ENCODE measurements at regions of chr12 and their contacts with region 1.

Region 1: DNA sequence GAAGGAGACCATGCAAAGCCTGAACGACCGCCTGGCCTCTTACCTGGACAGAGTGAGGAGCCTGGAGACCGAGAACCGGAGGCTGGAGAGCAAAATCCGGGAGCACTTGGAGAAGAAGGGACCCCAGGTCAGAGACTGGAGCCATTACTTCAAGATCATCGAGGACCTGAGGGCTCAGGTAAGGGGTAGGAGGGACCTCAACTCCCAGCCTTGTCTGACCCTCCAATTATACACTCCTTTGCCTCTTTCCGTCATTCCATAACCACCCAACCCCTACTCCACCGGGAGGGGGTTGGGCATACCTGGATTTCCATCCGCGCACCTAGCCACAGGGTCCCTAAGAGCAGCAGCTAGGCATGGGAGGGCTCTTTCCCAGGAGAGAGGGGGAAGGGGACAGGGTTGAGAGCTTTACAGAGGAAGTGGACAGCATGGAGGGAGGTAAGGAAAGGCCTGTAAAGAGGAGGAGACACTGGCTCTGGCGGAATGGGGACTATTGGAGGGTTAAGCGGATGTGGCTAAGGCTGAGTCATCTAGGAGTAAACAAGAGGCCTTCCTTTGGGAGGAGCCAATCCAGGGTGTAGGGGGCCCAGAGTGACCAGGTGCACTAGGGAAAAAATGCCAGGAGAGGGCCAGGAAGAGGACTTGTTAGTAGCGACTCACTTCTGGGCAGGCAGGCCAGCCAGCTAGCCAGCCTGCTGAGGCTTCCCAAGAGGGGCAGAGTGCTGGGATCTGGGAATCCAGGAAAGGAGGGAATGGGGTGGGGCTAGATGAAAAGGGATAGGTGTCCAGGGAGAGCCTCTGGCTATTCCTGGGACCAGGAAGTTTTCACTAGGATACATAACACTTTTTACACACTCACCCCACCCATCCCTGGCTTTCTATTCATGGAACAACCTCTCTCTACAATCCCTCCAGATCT is 754 bp downstream of the KRT18 start:
- DNase-seq: peak; percentile 61 to 78
- H3K4me3 ChIP-seq: peak overlapping the region; percentile 94
- H3K27ac ChIP-seq: peak overlapping the region; percentile 95
- H3K4me1 ChIP-seq: peaks cover 41% of the 10 kb centered on the region
- H3K27me3 ChIP-seq: no peaks in the 10 kb centered on the region
- CTCF ChIP-seq: no peak

Region 2: GRCh38 chr12:52442600-52443061 is 507.0 kb before region 1 on chr12:
- CTCF ChIA-PET with region 1: no interaction called
- POLR2A ChIA-PET with region 1: interaction called, 10 read pairs
- intact Hi-C with region 1: no loop called
- DNase-seq: peak; percentile 82 to 92
- H3K4me3 ChIP-seq: peak overlapping the region; percentile 17; the same call in 1 of the 2 replicates
- H3K27ac ChIP-seq: peak overlapping the region; percentile 97
- H3K4me1 ChIP-seq: peaks cover 74% of the 10 kb centered on the region
- H3K27me3 ChIP-seq: no peaks in the 10 kb centered on the region
- CTCF ChIP-seq: no peak; the same call in 1 of the 2 replicates

Region 3: DNA sequence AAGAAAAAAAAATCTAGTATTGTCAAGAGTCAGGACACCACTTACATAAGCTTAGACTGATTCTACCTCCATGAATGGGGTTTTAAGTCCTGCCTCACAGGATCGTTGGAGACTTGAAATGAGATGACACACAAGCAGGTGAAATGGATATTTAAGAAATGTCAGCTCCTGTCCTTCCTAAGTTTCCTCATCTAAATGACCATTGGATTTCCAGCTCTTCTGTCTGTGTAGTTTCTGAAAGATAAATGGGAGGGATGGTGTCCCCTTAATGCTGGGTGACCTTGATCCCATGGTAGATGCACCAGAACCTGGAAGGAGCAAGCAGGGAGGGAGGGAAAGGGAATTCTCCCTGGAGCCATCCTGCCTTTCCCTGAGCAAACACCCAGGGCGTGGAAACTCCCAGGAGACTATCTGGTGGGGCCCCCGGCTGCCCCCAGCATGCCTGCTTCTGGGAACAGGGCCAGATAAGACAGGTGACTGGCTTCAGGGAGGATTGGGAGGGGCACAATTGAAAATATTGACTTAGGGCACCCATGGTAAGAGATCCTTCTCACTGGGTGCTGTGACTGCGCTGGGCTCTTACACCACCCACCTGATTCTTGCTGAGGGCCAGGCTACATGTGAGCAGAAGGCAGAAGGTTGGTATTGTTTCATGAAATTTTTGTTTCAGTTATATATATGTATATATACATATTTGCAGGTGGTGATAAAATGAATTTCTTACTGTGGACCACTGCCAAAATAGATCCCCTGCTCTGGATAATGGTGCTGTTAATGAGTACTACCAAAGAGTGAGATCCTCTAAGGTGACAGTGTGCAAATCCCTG is 54.4 kb before region 1 on chr12:
- CTCF ChIA-PET with region 1: no interaction called
- POLR2A ChIA-PET with region 1: interaction called, 12 read pairs
- intact Hi-C with region 1: no loop called
- DNase-seq: peak; percentile 84 to 92
- H3K4me3 ChIP-seq: no peak overlapping the region
- H3K27ac ChIP-seq: peak overlapping the region; percentile 93
- H3K4me1 ChIP-seq: peaks cover 56% of the 10 kb centered on the region
- H3K27me3 ChIP-seq: no peaks in the 10 kb centered on the region
- CTCF ChIP-seq: no peak

Region 4: GRCh38 chr12:52924764-52925716 is 24.6 kb before region 1 on chr12:
- CTCF ChIA-PET with region 1: interaction called, 19 read pairs
- POLR2A ChIA-PET with region 1: interaction called, 311 read pairs
- intact Hi-C with region 1: loop called (anchors 1 kb)
- DNase-seq: peak; percentile 78 to 94
- H3K4me3 ChIP-seq: peak overlapping the region; percentile 53
- H3K27ac ChIP-seq: peak overlapping the region; percentile 100
- H3K4me1 ChIP-seq: peaks cover 80% of the 10 kb centered on the region
- H3K27me3 ChIP-seq: no peaks in the 10 kb centered on the region
- CTCF ChIP-seq: no peak

Region 5: GRCh38 chr12:52980693-52981423 is 31.2 kb after region 1 on chr12:
- CTCF ChIA-PET with region 1: no interaction called
- POLR2A ChIA-PET with region 1: interaction called, 24 read pairs
- intact Hi-C with region 1: no loop called
- DNase-seq: peak; percentile 87 to 91
- H3K4me3 ChIP-seq: no peak overlapping the region
- H3K27ac ChIP-seq: no peak overlapping the region
- H3K4me1 ChIP-seq: peaks cover 26% of the 10 kb centered on the region
- H3K27me3 ChIP-seq: no peaks in the 10 kb centered on the region
- CTCF ChIP-seq: peak; percentile 98

Region 6: GRCh38 chr12:53123578-53124351 is 174.1 kb after region 1 on chr12:
- CTCF ChIA-PET with region 1: no interaction called
- POLR2A ChIA-PET with region 1: interaction called, 12 read pairs
- intact Hi-C with region 1: no loop called
- DNase-seq: no peak
- H3K4me3 ChIP-seq: no peak overlapping the region
- H3K27ac ChIP-seq: no peak overlapping the region
- H3K4me1 ChIP-seq: no peaks in the 10 kb centered on the region
- H3K27me3 ChIP-seq: no peaks in the 10 kb centered on the region
- CTCF ChIP-seq: no peak